Tibial artery (tissue), 4 donors: ENCODE measurements at regions of chr14 and their contacts with region 1.

Region 1: DNA sequence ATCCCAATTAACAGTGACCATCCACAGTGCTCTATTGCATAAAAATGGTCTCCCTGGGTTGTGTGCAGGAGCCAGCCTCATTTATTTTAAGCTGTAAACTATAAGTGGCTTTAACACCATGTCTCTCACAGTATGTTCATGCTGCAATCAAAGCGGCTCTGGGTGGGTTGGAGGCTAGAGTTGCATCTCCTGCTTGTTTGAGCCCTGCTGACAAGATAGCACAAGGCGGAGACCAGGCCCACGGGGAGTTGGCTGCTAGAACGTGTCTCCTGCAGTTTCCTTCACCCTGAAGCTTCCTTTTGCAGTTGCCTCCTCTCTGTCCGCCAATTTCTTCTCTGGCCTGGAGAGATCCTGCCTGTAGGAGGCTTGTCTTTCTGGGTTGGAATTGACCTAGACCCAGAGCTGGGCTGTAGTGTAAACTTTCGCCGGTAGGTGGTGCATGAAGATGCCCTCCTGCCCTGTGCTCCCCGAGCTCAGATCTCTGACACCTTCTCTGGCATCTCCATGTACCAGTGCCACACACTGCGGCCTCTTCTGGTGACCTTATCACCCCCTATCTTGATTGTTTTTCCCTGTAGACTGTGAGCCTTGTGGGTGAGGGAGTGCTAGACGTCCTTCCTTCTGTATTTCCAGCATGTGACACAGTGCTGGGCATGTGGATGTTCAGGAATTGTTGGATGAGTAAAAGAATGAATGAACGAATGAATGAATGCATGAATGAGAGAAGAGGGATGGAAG is 10.3 kb downstream of the OTUB2 start:
- DNase-seq: peak; percentile 64 to 75
- H3K4me3 ChIP-seq: no peak overlapping the region
- H3K27ac ChIP-seq: no peak overlapping the region
- H3K4me1 ChIP-seq: peaks cover 0 to 1% (median 0%) of the 10 kb centered on the region in 4 donors
- H3K27me3 ChIP-seq: no peaks in the 10 kb centered on the region
- CTCF ChIP-seq: peak; percentile 74 to 78

Region 2: DNA sequence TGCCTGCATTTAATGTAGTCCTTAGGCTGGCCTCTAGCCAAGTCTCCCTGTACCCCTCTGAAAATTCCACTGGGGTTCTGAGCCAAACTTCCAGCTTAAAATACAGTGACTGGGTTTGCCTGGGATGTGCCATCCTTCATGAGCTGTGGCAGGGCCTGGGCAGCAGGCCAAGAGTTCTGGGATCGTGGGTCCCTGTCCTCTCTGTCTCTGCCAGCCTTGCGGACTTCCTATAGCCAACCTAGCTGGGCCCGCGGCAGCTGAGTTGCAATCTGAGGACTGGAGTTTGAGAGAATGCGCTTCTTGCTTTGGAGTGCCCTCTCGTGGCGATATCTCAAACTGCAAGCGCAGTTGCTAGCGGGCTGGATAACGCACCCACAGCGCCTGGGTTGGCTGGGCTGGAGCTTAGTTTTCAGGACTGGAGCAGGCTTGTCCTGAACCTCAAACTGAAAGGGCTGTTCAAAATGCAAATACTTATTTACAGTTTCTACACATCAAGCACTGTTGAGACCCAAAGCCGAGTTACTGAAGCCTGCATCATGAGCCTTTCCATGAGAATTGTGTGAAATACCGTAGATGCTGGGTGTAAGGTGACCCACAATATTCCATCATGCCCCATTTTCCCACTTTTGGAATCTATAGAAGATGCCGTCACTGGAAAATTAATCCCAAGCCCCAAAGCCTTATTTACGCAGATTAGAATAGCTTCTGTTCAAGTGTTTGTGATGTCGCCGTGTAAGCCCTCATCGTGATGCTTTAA is 100.3 kb after region 1 on chr14:
- intact Hi-C with region 1: loop called (anchors 5 kb)
- DNase-seq: peak; percentile 90 to 91
- H3K4me3 ChIP-seq: no peak overlapping the region
- H3K27ac ChIP-seq: no peak overlapping the region
- H3K4me1 ChIP-seq: peaks cover 0 to 3% (median 0%) of the 10 kb centered on the region in 4 donors
- H3K27me3 ChIP-seq: peaks cover 0 to 16% of the 10 kb centered on the region in 2 donors
- CTCF ChIP-seq: peak; percentile 94 to 97

Region 3: DNA sequence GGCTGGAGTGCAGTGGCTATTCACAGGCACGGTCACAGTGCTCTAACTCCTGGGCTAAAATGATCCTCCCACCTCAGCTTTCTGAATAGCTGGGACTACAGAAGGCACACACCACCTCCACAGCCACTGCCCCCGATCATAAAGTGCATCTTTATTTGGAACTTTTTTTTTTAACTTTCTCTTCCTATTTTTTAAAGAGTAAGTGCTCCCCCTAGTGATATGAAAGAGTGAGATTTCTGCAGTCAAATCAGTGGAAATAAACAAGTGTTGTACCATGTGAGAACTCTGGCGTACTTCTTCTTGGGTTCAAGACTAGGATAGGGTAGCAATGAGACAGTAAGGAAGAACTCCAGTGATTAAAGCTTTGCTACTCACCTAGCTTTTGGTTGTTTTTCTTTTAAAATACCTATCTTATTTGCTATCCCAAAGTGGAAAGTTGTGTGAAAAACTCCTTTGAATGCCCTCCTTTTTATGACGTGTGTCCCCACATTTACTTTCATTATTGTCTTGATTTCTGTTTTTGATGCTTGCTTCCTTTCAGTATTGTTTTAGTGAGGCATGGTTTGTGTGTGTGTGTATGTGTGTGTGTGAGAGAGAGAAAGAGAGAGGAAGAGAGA is 144.3 kb after region 1 on chr14:
- intact Hi-C with region 1: loop called (anchors 5 kb)
- DNase-seq: no peak
- H3K4me3 ChIP-seq: no peak overlapping the region
- H3K27ac ChIP-seq: no peak overlapping the region
- H3K4me1 ChIP-seq: no peaks in the 10 kb centered on the region
- H3K27me3 ChIP-seq: peaks cover 2 to 39% of the 10 kb centered on the region in 2 donors
- CTCF ChIP-seq: peak; percentile 50 to 51